Dorsolateral prefrontal cortex (tissue), 120 donors: ENCODE measurements at regions of chr9 and their contacts with region 1.

Region 1: DNA sequence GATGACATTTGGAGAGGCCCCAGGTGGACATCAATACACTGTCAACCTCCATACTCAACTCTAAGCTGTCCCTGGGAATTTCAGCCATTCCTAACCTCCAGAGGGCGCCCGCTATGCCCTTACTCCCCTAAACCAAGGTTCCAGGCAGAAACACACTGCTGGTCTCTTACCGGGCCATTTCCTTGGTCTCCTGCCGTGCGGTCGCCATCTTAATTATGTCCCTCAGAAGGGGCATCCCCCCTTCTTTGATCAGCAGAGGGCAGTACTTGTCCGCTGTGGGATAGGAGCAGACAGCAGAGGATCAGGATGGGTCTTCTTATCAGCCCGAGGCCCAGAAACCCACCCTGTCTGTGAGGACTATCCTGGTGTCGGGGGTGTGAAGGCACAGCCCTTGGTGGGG is 9.3 kb upstream of the ZDHHC12 start:
- DNase-seq: peak in 9 of 10 donors; percentile 37 to 72 (median 62)
- H3K4me3 ChIP-seq: peak overlapping the region in 4 of 59 donors; percentile 5 to 20 (median 12)
- H3K27ac ChIP-seq: peak overlapping the region in 43 of 59 donors; percentile 0 to 82 (median 61)
- H3K27me3 ChIP-seq: no peaks in the 10 kb centered on the region
- CTCF ChIP-seq: peak in 55 of 56 donors; percentile 26 to 74 (median 59)

Region 2: DNA sequence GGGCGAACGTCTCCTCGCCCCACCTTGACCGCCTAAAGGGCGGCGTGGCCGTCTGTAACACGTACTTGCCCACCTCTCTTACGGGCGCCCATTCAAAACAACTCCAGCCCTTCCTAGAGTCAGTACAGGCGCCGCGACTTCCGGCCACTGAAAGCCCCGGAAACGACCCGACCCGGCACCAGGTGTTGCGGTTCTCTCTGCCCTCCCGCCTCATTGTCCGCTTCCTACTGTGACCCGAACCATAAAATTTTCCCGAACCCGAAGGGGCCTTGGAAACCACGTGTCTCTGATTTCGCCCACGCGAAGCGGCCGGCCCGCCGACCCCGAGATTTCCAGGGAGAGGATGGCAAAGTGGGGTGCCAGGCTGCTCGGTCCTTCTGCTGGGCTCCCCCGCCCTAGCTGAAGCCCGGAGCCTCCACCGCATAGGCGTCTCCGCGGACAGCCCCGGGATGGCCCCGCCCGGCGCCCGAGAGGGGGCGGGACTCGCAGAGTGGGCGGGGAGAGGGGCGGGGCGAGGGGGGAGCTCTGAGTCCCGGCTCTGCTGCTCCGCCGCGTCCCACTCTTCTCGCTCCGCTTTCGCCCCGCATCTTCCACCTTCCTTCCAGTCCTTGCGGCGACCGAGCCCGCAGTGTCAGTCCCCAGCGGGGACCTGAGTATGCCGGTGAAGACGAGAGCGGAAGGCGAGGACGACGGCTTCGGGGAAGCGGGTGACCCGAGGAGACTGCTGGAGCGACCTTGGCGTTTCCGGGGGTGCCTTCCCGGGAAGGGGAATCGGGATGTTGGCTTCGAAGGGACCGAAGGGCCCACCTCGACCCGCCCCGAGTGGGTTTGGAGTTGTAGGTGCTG is 605.0 kb before region 1 on chr9:
- intact Hi-C with region 1: no loop called
- DNase-seq: peak; percentile 69 to 88 (median 84)
- H3K4me3 ChIP-seq: peak overlapping the region; percentile 73 to 99 (median 93)
- H3K27ac ChIP-seq: peak overlapping the region; percentile 93 to 100 (median 98)
- H3K27me3 ChIP-seq: no peaks in the 10 kb centered on the region
- CTCF ChIP-seq: peak in 29 of 56 donors; percentile 5 to 59 (median 23)

Region 3: DNA sequence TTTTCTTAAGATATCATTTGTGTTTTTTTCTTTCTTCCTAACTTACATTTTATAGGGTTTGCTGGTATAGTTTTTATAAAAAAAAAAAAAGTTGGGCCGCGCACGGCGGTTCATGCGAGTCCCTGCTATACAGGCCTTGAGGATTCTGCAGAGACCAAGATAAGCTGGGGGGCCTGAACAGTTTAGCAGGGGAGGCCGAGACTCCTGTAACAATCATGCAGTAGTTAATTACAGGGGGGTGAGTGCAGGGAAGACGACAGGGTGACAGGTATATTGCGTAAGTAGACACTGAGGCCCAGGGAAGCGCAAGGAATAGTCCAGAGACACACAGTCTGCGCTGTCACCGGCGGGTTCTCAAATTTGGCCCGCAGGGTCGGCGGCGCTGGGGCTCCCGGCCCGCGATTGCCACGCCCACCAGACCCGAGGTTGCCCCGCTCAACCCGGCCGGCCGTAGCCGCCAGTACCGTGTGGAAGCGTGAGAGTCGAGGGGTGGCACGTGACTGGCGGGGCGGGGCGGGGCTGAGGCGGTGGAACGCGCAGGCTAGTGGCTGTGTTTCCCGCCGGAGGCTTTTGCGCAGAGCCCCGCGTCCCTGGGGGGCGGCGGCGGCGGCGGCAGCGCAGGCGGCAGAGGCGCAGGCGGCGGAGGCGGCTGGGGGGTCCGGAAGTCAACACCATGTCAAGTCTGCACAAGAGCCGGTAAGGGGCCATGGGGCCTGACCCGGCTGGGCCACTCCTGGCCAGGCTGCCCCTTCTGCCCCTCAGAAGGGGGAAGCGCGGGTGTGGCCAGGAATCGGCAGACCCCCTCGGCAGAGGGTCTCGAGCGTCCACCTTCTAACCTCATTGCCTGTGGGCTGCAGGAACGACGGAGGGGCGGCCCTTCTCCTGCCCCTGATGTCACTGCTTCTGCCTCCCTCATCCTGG is 53.7 kb after region 1 on chr9 and contains the start of gene TBC1D13:
- intact Hi-C with region 1: loop called in 1 of 2 experiments (anchors 5 kb)
- DNase-seq: peak; percentile 81 to 93 (median 88)
- H3K4me3 ChIP-seq: peak within 1 kb of the TSS; percentile 57 to 100 (median 98)
- H3K27ac ChIP-seq: peak within 1 kb of the TSS; percentile 66 to 97 (median 91)
- H3K27me3 ChIP-seq: no peaks in the 10 kb centered on the region
- CTCF ChIP-seq: peak in 41 of 56 donors; percentile 6 to 62 (median 34)
- total RNA-seq, gene TBC1D13: 32.1 to 59.0 (median 40.5) TPM

Region 4: DNA sequence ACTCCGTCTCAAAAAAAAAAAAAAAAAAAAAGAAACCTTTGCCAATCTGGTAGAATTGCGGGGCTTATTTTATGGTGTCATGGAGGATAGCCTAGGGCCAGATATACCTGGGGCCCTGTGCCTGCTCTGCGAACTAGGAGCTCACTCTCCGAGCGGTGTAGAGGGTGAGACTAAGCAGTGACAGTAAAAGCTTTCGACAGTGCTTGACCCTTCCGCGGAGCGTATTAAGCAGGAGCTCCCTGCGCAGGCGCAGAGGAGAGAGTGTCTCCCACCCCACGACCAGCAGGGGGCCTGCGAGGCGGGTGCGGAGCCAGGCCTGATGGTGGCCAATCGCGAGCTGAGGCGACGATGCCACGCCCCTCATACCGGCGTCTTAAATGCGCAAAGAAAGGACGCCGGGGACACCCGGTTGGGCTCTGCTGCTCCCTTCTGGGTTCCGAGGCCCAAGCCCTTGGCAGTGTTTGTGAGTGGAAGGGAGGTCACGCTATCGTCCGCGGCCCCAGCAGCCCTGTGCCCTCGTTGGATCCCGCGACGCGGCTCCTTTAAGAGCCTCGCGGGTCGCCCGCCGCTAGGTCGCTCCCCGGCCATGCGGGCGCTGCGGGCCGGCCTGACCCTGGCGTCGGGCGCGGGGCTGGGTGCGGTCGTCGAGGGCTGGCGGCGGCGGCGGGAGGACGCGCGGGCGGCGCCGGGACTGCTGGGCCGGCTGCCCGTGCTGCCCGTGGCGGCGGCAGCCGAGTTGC is 85.0 kb after region 1 on chr9 and contains the start of gene ENDOG:
- intact Hi-C with region 1: loop called in 1 of 2 experiments (anchors 5 kb)
- DNase-seq: peak; percentile 97 to 99 (median 98)
- H3K4me3 ChIP-seq: peak within 1 kb of the TSS; percentile 48 to 90 (median 74)
- H3K27ac ChIP-seq: peak within 1 kb of the TSS; percentile 36 to 95 (median 89)
- H3K27me3 ChIP-seq: no peaks in the 10 kb centered on the region
- CTCF ChIP-seq: peak; percentile 69 to 98 (median 90)
- total RNA-seq, gene ENDOG: 20.4 to 57.3 (median 35.8) TPM